ENCODE measurements at regions of chr10 and their contacts with region 1.

Region 1: GRCh38 chr10:101214446-101215396 is 14.5 kb downstream of the LBX1 start:
- DNase-seq: peak; percentile 66 to 84
- ATAC-seq: peak; percentile 76 to 92 (median 88)
- H3K4me3 ChIP-seq: peak overlapping the region; percentile 61
- H3K27ac ChIP-seq: no peak overlapping the region
- H3K4me1 ChIP-seq: peaks cover 3% of the 10 kb centered on the region
- H3K27me3 ChIP-seq: peaks cover 0 to 16% (median 2%) of the 10 kb centered on the region in 3 donors
- CTCF ChIP-seq: peak; percentile 91

Region 2: GRCh38 chr10:101291331-101292193 is 76.8 kb after region 1 on chr10:
- intact Hi-C with region 1: loop called (anchors 1 to 2 kb)
- DNase-seq: peak; percentile 71 to 89
- ATAC-seq: peak; percentile 88 to 92 (median 90)
- H3K4me3 ChIP-seq: peak overlapping the region; percentile 81
- H3K27ac ChIP-seq: peak overlapping the region; percentile 88
- H3K4me1 ChIP-seq: peaks cover 16% of the 10 kb centered on the region
- H3K27me3 ChIP-seq: peaks cover 0 to 17% (median 0%) of the 10 kb centered on the region in 3 donors
- CTCF ChIP-seq: peak; percentile 71

Region 3: GRCh38 chr10:101441541-101442455 is 227.1 kb after region 1 on chr10:
- intact Hi-C with region 1: loop called (anchors 1 to 10 kb)
- DNase-seq: no peak
- ATAC-seq: peak; percentile 89 to 95 (median 92)
- H3K4me3 ChIP-seq: no peak overlapping the region
- H3K27ac ChIP-seq: no peak overlapping the region
- H3K4me1 ChIP-seq: peaks cover 26% of the 10 kb centered on the region
- H3K27me3 ChIP-seq: no peaks in the 10 kb centered on the region
- CTCF ChIP-seq: peak; percentile 51

Region 4: GRCh38 chr10:101467286-101467770 is 252.6 kb after region 1 on chr10:
- intact Hi-C with region 1: loop called in 1 of 2 experiments (anchors 2 kb)
- DNase-seq: no peak
- ATAC-seq: peak; percentile 65 to 94 (median 82)
- H3K4me3 ChIP-seq: peak overlapping the region; percentile 33
- H3K27ac ChIP-seq: no peak overlapping the region
- H3K4me1 ChIP-seq: no peaks in the 10 kb centered on the region
- H3K27me3 ChIP-seq: no peaks in the 10 kb centered on the region
- CTCF ChIP-seq: peak; percentile 78

Region 5: GRCh38 chr10:101569838-101570766 is 355.4 kb after region 1 on chr10:
- intact Hi-C with region 1: loop called (anchors 2 to 5 kb)
- DNase-seq: peak; percentile 80 to 88
- ATAC-seq: peak; percentile 87 to 94 (median 90)
- H3K4me3 ChIP-seq: peak overlapping the region; percentile 76
- H3K27ac ChIP-seq: no peak overlapping the region
- H3K4me1 ChIP-seq: no peaks in the 10 kb centered on the region
- H3K27me3 ChIP-seq: peaks cover 0 to 46% (median 11%) of the 10 kb centered on the region in 3 donors
- CTCF ChIP-seq: peak; percentile 88